ENCODE measurements at regions of chr17 and their contacts with region 1.

Region 1: GRCh38 chr17:76557368-76558197 is 17.7 kb downstream of the PRCD start:
- DNase-seq: peak; percentile 93
- H3K4me3 Mint-ChIP-seq: peak overlapping the region; percentile 98
- H3K27ac Mint-ChIP-seq: peak overlapping the region; percentile 97
- H3K4me1 Mint-ChIP-seq: peaks cover 43% of the 10 kb centered on the region
- H3K27me3 Mint-ChIP-seq: no peaks in the 10 kb centered on the region

Region 2: GRCh38 chr17:74852237-74853047 is 1705.1 kb before region 1 on chr17:
- intact Hi-C with region 1: loop called (anchors 5 kb)
- DNase-seq: peak; percentile 72
- H3K4me3 Mint-ChIP-seq: peak overlapping the region; percentile 86
- H3K27ac Mint-ChIP-seq: peak overlapping the region; percentile 52
- H3K4me1 Mint-ChIP-seq: peaks cover 11% of the 10 kb centered on the region
- H3K27me3 Mint-ChIP-seq: peaks cover 19% of the 10 kb centered on the region

Region 3: GRCh38 chr17:76027159-76027839 is 530.3 kb before region 1 on chr17 and contains the start of gene EVPL:
- intact Hi-C with region 1: no loop called
- DNase-seq: no peak
- H3K4me3 Mint-ChIP-seq: no peak within 1 kb of the TSS
- H3K27ac Mint-ChIP-seq: no peak within 1 kb of the TSS
- H3K4me1 Mint-ChIP-seq: peaks cover 8% of the 10 kb centered on the region
- H3K27me3 Mint-ChIP-seq: no peaks in the 10 kb centered on the region
- total RNA-seq, gene EVPL: 0.02 and 0.05 TPM in 2 replicates

Region 4: GRCh38 chr17:76353599-76354316 is 203.8 kb before region 1 on chr17 and contains the start of gene PRPSAP1:
- intact Hi-C with region 1: loop called (anchors 5 kb)
- DNase-seq: peak; percentile 82
- H3K4me3 Mint-ChIP-seq: peak within 1 kb of the TSS; percentile 93
- H3K27ac Mint-ChIP-seq: peak within 1 kb of the TSS; percentile 99
- H3K4me1 Mint-ChIP-seq: peaks cover 28% of the 10 kb centered on the region
- H3K27me3 Mint-ChIP-seq: peaks cover 3% of the 10 kb centered on the region
- total RNA-seq, gene PRPSAP1: 41.2 and 44.0 TPM in 2 replicates

Region 5: GRCh38 chr17:76452660-76453430 is 104.7 kb before region 1 on chr17 and contains the start of gene UBE2O:
- intact Hi-C with region 1: loop called (anchors 5 kb)
- DNase-seq: peak; percentile 93
- H3K4me3 Mint-ChIP-seq: peak within 1 kb of the TSS; percentile 91
- H3K27ac Mint-ChIP-seq: peak within 1 kb of the TSS; percentile 87
- H3K4me1 Mint-ChIP-seq: peaks cover 42% of the 10 kb centered on the region
- H3K27me3 Mint-ChIP-seq: peaks cover 10% of the 10 kb centered on the region
- total RNA-seq, gene UBE2O: 44.9 and 45.1 TPM in 2 replicates

Region 6: GRCh38 chr17:76515274-76515949 is 42.2 kb before region 1 on chr17:
- intact Hi-C with region 1: loop called (anchors 1 kb)
- DNase-seq: peak; percentile 86
- H3K4me3 Mint-ChIP-seq: peak overlapping the region; percentile 72
- H3K27ac Mint-ChIP-seq: peak overlapping the region; percentile 92
- H3K4me1 Mint-ChIP-seq: peaks cover 59% of the 10 kb centered on the region
- H3K27me3 Mint-ChIP-seq: peaks cover 5% of the 10 kb centered on the region

Region 7: GRCh38 chr17:76623271-76624146 is 65.9 kb after region 1 on chr17:
- intact Hi-C with region 1: loop called (anchors 1 kb)
- DNase-seq: peak; percentile 59
- H3K4me3 Mint-ChIP-seq: no peak overlapping the region
- H3K27ac Mint-ChIP-seq: no peak overlapping the region
- H3K4me1 Mint-ChIP-seq: peaks cover 7% of the 10 kb centered on the region
- H3K27me3 Mint-ChIP-seq: peaks cover 12% of the 10 kb centered on the region

Region 8: GRCh38 chr17:76671123-76671911 is 113.7 kb after region 1 on chr17:
- intact Hi-C with region 1: loop called (anchors 2 kb)
- DNase-seq: peak; percentile 99
- H3K4me3 Mint-ChIP-seq: peak overlapping the region; percentile 93
- H3K27ac Mint-ChIP-seq: peak overlapping the region; percentile 90
- H3K4me1 Mint-ChIP-seq: peaks cover 30% of the 10 kb centered on the region
- H3K27me3 Mint-ChIP-seq: peaks cover 10% of the 10 kb centered on the region

Measured in activated T-helper 1 cell treated with anti-CD3 and anti-CD28 coated beads, Interleukin-12 subunit alpha, Interleukin-12 subunit beta, Interleukin-2, Interleukin-4 antibody, amounts not matched to agents 30 ng/mL and 10 ng/mL and 1 ng/mL, durations not matched to agents 14 hours and 24 hours and 36 hours (primary cell).